CD4-positive, alpha-beta T cell (primary cell): ENCODE measurements at regions of chr7 and their contacts with region 1.

Region 1: DNA sequence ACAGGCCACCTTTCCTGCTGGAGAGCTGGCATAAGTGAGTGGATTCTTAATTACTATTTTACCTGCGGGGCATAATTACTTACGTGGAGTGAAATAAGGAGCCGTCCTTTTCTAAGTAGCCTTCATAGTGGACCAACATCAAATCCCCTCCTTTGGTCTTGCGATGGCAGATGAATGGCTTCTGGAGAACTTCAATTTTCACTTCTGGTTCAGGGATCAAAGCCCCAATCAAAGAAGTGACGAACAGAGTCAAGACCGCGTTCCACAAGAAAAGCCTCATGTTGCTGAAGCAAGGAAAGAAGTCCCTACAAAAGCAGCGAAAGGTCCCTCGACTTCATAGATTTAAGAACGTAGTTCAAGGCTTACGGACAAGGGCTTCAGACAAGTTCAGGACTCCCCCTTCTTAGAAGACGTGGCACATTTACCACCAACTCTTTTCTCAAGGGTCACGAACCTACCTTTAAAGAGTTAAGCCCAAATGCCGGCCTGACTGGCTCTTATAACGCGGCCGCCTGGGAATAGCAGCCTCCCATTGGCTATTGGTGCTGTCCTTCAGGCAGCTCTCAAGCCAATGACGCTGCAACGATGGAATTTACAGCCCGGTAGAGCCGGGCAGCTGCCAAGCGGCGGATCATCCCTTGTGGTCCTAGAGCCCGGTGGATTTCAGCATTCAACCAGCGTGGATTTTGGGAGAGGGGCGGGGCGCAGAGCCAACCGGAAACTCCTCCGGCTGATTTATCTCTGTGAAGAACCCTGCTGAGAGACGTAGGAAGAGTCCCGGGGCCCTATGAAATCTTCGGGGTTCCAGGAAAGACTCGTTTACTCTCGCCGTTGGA is at the start of gene FKBP14:
- DNase-seq: peak; percentile 76 to 97 (median 88)
- ATAC-seq: peak; percentile 82
- H3K4me3 ChIP-seq: peak within 1 kb of the TSS; percentile 70
- H3K4me3 Mint-ChIP-seq: peak within 1 kb of the TSS; percentile 90
- H3K27ac ChIP-seq: peak within 1 kb of the TSS; percentile 36 to 50
- H3K27ac Mint-ChIP-seq: peak within 1 kb of the TSS; percentile 80
- H3K4me1 ChIP-seq: peaks cover 14% of the 10 kb centered on the region
- H3K4me1 Mint-ChIP-seq: peaks cover 42% of the 10 kb centered on the region
- H3K27me3 ChIP-seq: no peaks in the 10 kb centered on the region
- H3K27me3 Mint-ChIP-seq: no peaks in the 10 kb centered on the region
- CTCF ChIP-seq: no peak
- total RNA-seq, gene FKBP14: 4.3 to 5.2 TPM

Region 2: DNA sequence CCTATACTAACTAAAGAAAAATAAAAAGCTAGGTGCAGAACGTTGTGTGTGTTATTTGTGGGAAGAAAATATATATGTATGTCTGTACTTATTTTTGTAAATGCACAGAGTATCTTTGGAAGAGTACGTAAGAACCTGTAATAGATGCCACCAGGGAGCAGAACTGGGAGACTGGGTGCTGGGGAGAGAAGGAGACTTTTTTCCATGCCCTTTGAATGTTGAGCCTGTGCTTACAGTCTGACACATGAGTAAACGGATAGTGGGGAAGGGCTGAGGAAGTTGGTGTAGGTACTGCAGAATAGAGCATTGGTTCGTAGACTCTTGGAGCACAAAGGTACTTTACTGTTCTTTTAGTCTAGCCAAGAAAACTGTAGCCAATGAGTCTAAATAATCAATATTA is 35.5 kb before region 1 on chr7:
- CTCF ChIA-PET with region 1: no interaction called
- POLR2A ChIA-PET with region 1: interaction called, 7 read pairs
- intact Hi-C with region 1: loop called in 1 of 2 experiments (anchors 5 kb)
- DNase-seq: no peak
- ATAC-seq: no peak
- H3K4me3 ChIP-seq: no peak overlapping the region
- H3K4me3 Mint-ChIP-seq: peak overlapping the region; percentile 59
- H3K27ac ChIP-seq: no peak overlapping the region
- H3K27ac Mint-ChIP-seq: no peak overlapping the region
- H3K4me1 ChIP-seq: peaks cover 9% of the 10 kb centered on the region
- H3K4me1 Mint-ChIP-seq: peaks cover 8% of the 10 kb centered on the region
- H3K27me3 ChIP-seq: peaks cover 23 to 32% of the 10 kb centered on the region in 2 experiments
- H3K27me3 Mint-ChIP-seq: peaks cover 49% of the 10 kb centered on the region
- CTCF ChIP-seq: no peak

Region 3: DNA sequence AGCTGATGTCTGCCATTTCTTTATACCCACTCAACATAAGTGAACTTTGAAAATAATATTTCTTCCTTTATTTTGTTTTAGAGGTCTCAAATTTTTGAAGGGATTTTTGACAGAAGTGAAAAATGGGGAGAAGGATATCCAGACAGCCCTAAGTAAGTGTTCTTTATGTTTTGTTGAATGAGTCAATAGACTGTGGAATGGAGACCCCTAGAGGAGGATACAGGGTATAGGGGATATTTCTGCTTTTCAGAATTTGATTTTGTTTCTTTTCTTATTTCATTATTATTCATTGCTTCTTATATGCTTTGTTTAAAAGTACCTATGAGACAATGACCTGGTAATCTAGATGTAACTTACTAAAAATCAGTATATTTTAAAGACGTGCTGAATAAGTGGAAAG is 36.1 kb after region 1 on chr7:
- CTCF ChIA-PET with region 1: interaction called, 18 read pairs
- POLR2A ChIA-PET with region 1: interaction called, 13 read pairs
- intact Hi-C with region 1: loop called (anchors 2 kb)
- DNase-seq: peak in 3 of 14 experiments; percentile 29 to 44 (median 38)
- ATAC-seq: peak; percentile 61
- H3K4me3 ChIP-seq: no peak overlapping the region
- H3K4me3 Mint-ChIP-seq: no peak overlapping the region
- H3K27ac ChIP-seq: no peak overlapping the region
- H3K27ac Mint-ChIP-seq: no peak overlapping the region
- H3K4me1 ChIP-seq: no peaks in the 10 kb centered on the region
- H3K4me1 Mint-ChIP-seq: peaks cover 21% of the 10 kb centered on the region
- H3K27me3 ChIP-seq: no peaks in the 10 kb centered on the region
- H3K27me3 Mint-ChIP-seq: no peaks in the 10 kb centered on the region
- CTCF ChIP-seq: peak; percentile 65

Region 4: GRCh38 chr7:30284298-30285066 is 258.0 kb after region 1 on chr7 and contains the start of gene ZNRF2:
- CTCF ChIA-PET with region 1: no interaction called
- POLR2A ChIA-PET with region 1: no interaction called
- intact Hi-C with region 1: loop called (anchors 2 to 5 kb)
- DNase-seq: peak; percentile 97 to 100 (median 99)
- ATAC-seq: peak; percentile 85
- H3K4me3 ChIP-seq: peak within 1 kb of the TSS; percentile 85
- H3K4me3 Mint-ChIP-seq: peak within 1 kb of the TSS; percentile 94
- H3K27ac ChIP-seq: peak within 1 kb of the TSS; percentile 66 to 78
- H3K27ac Mint-ChIP-seq: peak within 1 kb of the TSS; percentile 94
- H3K4me1 ChIP-seq: peaks cover 7% of the 10 kb centered on the region
- H3K4me1 Mint-ChIP-seq: peaks cover 40% of the 10 kb centered on the region
- H3K27me3 ChIP-seq: no peaks in the 10 kb centered on the region
- H3K27me3 Mint-ChIP-seq: no peaks in the 10 kb centered on the region
- CTCF ChIP-seq: peak; percentile 44
- total RNA-seq, gene ZNRF2: 20.4 to 23.6 TPM

Region 5: DNA sequence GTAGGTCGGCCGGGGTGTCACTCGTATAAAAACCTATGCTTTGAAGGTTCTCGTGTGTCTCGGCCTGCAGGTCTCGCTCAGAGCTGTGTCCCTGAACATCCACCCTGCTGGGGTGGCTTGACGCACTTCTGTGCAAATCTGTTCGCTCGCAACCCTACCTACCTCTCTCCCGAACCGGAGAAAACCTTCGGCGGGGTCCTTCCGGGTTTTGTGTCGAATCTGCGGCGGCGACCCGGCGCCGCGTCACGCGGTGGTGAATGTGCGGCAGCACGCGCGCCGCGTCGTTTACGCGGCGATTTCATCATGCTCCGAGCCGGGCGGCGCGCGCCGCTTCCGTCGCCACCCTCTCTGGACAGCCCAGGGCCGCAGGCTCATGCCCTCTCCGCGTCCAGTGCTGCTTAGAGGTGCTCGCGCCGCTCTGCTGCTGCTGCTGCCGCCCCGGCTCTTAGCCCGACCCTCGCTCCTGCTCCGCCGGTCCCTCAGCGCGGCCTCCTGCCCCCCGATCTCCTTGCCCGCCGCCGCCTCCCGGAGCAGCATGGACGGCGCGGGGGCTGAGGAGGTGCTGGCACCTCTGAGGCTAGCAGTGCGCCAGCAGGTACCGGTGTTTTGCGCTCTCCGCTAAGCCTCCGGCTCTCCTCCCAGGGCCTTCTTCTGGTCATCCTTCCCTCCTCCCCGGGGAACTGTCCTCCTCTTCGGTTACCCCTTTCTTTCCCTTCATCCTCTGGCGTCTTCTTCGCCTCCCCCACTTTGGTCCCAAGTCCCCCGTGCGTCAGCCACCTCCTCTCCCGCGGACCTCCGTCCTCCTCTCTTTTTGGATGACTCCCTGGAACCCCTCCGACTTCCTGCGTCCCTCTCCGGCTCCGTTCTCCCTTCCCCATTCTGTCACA is 568.3 kb after region 1 on chr7 and contains the start of gene GARS1:
- CTCF ChIA-PET with region 1: no interaction called
- POLR2A ChIA-PET with region 1: interaction called, 7 read pairs
- intact Hi-C with region 1: loop called in 1 of 2 experiments (anchors 5 kb)
- DNase-seq: peak; percentile 80 to 95 (median 87)
- ATAC-seq: peak; percentile 82
- H3K4me3 ChIP-seq: peak within 1 kb of the TSS; percentile 85
- H3K4me3 Mint-ChIP-seq: peak within 1 kb of the TSS; percentile 99
- H3K27ac ChIP-seq: peak within 1 kb of the TSS; percentile 88 to 90
- H3K27ac Mint-ChIP-seq: peak within 1 kb of the TSS; percentile 100
- H3K4me1 ChIP-seq: peaks cover 28% of the 10 kb centered on the region
- H3K4me1 Mint-ChIP-seq: peaks cover 85% of the 10 kb centered on the region
- H3K27me3 ChIP-seq: no peaks in the 10 kb centered on the region
- H3K27me3 Mint-ChIP-seq: no peaks in the 10 kb centered on the region
- CTCF ChIP-seq: no peak
- total RNA-seq, gene GARS1: 127 to 132 TPM